Natural killer cell (primary cell): ENCODE measurements at regions of chr11 and their contacts with region 1.

Region 1: GRCh38 chr11:1389103-1389931 is 417 bp upstream of the BRSK2 start:
- DNase-seq: peak; percentile 90 to 98
- ATAC-seq: peak; percentile 95 to 99 (median 96)
- H3K4me3 ChIP-seq: peak overlapping the region; percentile 54
- H3K4me3 Mint-ChIP-seq: peak overlapping the region; percentile 75
- H3K27ac ChIP-seq: no peak overlapping the region
- H3K27ac Mint-ChIP-seq: peak overlapping the region in 1 of 2 donors; percentile 18
- H3K4me1 ChIP-seq: peaks cover 24% of the 10 kb centered on the region
- H3K4me1 Mint-ChIP-seq: peaks cover 0 to 14% of the 10 kb centered on the region in 2 donors
- H3K27me3 ChIP-seq: peaks cover 25% of the 10 kb centered on the region
- H3K27me3 Mint-ChIP-seq: peaks cover 11 to 32% of the 10 kb centered on the region in 2 donors
- CTCF ChIP-seq: no peak

Region 2: DNA sequence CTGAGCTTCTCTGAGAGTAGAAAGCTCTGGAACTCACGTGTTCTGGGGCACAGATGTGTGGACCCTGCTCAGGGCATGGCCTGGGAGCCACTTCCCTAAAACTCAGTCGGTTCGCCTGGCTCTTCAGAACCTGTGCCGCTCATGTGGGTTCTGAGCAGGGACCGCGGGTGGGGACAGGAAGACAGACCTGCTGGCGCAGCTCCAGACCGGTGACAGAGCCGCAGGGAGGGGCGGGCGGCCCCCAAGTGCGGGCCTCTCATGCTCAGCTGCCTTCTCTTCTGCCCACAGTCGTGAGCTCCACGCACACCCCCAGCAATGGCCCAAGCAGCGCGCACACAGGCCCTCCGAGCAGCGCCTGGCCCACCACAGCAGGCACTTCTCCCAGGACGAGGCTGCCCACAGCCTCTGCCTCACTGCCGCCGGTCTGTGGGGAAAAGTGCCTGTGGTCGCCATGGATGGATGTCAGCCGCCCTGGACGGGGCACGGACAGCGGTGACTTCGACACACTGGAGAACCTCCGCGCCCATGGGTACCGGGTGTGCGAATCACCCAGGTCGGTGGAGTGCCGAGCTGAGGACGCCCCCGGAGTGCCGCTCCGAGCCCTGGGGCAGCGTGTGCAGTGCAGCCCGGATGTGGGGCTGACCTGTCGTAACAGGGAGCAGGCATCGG is 207.3 kb before region 1 on chr11:
- intact Hi-C with region 1: no loop called
- DNase-seq: peak in 1 of 2 donors; percentile 45
- ATAC-seq: peak in 1 of 3 donors; percentile 12
- H3K4me3 ChIP-seq: no peak overlapping the region
- H3K4me3 Mint-ChIP-seq: no peak overlapping the region
- H3K27ac ChIP-seq: no peak overlapping the region
- H3K27ac Mint-ChIP-seq: no peak overlapping the region
- H3K4me1 ChIP-seq: no peaks in the 10 kb centered on the region
- H3K4me1 Mint-ChIP-seq: no peaks in the 10 kb centered on the region
- H3K27me3 ChIP-seq: no peaks in the 10 kb centered on the region
- H3K27me3 Mint-ChIP-seq: no peaks in the 10 kb centered on the region
- CTCF ChIP-seq: no peak

Region 3: GRCh38 chr11:1335811-1336761 is 53.2 kb before region 1 on chr11:
- intact Hi-C with region 1: loop called (anchors 10 kb)
- DNase-seq: peak; percentile 57 to 82
- ATAC-seq: peak; percentile 60 to 75 (median 62)
- H3K4me3 ChIP-seq: peak overlapping the region; percentile 49
- H3K4me3 Mint-ChIP-seq: peak overlapping the region; percentile 79
- H3K27ac ChIP-seq: peak overlapping the region; percentile 36
- H3K27ac Mint-ChIP-seq: peak overlapping the region in 1 of 2 donors; percentile 44
- H3K4me1 ChIP-seq: peaks cover 12% of the 10 kb centered on the region
- H3K4me1 Mint-ChIP-seq: peaks cover 12 to 23% of the 10 kb centered on the region in 2 donors
- H3K27me3 ChIP-seq: no peaks in the 10 kb centered on the region
- H3K27me3 Mint-ChIP-seq: peaks cover 0 to 3% of the 10 kb centered on the region in 2 donors
- CTCF ChIP-seq: no peak